ENCODE measurements at regions of chr9 and their contacts with region 1.

Region 1: GRCh38 chr9:28073270-28073669 is 500.0 kb upstream of the C9orf72 start:
- DNase-seq: peak in 26 of 42 donors; percentile 2 to 72 (median 30)

Region 2: GRCh38 chr9:27726244-27727081 is 346.8 kb before region 1 on chr9:
- intact Hi-C with region 1: loop called (anchors 5 kb)
- DNase-seq: peak; percentile 36 to 88 (median 74)

Region 3: GRCh38 chr9:28155067-28155466 is 81.8 kb after region 1 on chr9:
- intact Hi-C with region 1: no loop called
- DNase-seq: no peak